ENCODE measurements at regions of chr10 and their contacts with region 1.

Region 1: GRCh38 chr10:32786968-32787367 is 171.1 kb downstream of the ITGB1 start:
- DNase-seq: no peak
- H3K4me3 Mint-ChIP-seq: no peak overlapping the region
- H3K27ac Mint-ChIP-seq: no peak overlapping the region
- H3K4me1 Mint-ChIP-seq: no peaks in the 10 kb centered on the region
- H3K27me3 Mint-ChIP-seq: no peaks in the 10 kb centered on the region

Region 2: GRCh38 chr10:33041779-33042437 is 254.9 kb after region 1 on chr10:
- CTCF ChIA-PET with region 1: no interaction called
- POLR2A ChIA-PET with region 1: interaction called, 10 read pairs
- DNase-seq: no peak
- H3K4me3 Mint-ChIP-seq: no peak overlapping the region
- H3K27ac Mint-ChIP-seq: no peak overlapping the region
- H3K4me1 Mint-ChIP-seq: no peaks in the 10 kb centered on the region
- H3K27me3 Mint-ChIP-seq: peaks cover 7% of the 10 kb centered on the region

Region 3: DNA sequence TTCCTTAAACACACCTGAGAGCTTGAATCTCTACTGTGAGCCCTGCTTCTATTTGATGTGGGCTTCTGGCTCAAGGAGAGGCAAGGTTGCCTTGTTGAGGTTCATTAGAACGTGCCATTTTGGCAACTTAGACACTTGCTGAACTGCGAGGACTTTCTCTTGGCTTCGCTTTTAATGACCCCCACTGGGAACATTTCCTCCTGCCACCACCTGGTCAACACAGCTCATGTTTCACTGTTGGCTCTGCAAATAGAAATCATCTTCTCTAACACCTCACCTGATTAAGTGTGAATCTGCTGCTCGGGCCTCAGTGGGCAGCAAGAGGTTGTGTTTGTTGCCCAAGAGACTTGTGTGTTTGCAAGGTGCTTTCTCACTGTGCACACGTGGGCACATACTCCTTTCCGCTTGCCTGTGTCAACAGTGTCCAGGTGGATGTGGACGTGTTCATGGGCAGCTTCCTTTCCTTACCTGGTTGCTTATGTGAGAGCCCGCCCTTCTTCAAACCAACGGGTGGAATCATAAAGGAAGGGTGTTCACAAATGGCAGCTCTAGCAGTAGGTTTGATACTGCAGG is 400.5 kb after region 1 on chr10:
- CTCF ChIA-PET with region 1: no interaction called
- POLR2A ChIA-PET with region 1: no interaction called
- DNase-seq: no peak
- H3K4me3 Mint-ChIP-seq: no peak overlapping the region
- H3K27ac Mint-ChIP-seq: no peak overlapping the region
- H3K4me1 Mint-ChIP-seq: no peaks in the 10 kb centered on the region
- H3K27me3 Mint-ChIP-seq: peaks cover 14% of the 10 kb centered on the region

Measured in activated CD4-positive, alpha-beta T cell treated with anti-CD3 and anti-CD28 coated beads, Interleukin-2, amount 10 ng/mL, durations not matched to agents 7 days and 5 days (primary cell).